ENCODE measurements at regions of chr10 and their contacts with region 1.

Region 1: DNA sequence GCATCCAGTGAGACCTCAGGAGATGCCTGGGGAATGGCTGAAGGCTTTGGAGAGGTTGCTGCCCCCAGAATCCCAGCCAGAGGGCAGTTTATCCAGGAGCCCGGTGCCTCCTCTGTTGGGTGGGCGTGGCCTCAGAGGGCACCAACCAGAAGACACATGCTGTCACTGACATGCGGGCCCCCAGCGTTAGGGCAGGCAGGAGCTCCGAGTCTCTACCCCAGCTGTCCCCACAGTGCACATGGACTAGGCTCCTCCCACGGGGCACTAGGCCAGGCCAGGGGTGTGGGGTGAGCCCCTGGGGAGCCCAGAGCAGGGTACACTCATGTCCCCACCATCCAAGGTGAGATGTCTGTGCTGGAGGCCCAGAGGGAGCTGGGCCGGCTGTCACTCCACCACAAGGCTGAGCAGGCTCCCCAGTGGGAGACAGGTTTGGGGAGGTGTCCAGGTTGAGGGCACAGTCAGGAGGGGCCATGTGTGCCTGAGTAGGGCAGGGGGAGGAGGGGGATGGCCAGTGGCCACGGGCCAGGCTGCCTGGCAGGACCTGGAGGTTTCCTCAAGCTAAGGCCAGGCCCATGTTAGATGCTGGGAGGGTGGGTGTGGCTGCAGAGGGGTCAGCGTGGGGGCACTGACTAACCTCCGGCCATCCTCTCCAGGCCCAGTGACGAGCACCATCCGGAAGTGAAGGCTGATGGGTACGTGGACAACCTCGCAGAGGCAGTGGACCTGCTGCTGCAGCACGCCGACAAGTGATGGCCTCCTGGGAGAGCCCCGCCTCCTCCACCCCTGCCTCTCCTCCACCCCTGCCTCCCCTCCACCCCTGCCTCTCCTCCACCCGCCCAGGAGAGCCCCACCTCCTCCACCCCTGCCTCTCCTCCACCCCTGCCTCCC is 131.3 kb downstream of the FAM53B start:
- DNase-seq: no peak
- H3K4me3 ChIP-seq: no peak overlapping the region
- H3K27ac ChIP-seq: peak overlapping the region; percentile 18 to 88 (median 81)
- H3K4me1 ChIP-seq: peaks cover 27 to 94% (median 60%) of the 10 kb centered on the region in 6 donors
- H3K27me3 ChIP-seq: no peaks in the 10 kb centered on the region
- CTCF ChIP-seq: no peak
- POLR2A ChIP-seq: no peak

Region 2: DNA sequence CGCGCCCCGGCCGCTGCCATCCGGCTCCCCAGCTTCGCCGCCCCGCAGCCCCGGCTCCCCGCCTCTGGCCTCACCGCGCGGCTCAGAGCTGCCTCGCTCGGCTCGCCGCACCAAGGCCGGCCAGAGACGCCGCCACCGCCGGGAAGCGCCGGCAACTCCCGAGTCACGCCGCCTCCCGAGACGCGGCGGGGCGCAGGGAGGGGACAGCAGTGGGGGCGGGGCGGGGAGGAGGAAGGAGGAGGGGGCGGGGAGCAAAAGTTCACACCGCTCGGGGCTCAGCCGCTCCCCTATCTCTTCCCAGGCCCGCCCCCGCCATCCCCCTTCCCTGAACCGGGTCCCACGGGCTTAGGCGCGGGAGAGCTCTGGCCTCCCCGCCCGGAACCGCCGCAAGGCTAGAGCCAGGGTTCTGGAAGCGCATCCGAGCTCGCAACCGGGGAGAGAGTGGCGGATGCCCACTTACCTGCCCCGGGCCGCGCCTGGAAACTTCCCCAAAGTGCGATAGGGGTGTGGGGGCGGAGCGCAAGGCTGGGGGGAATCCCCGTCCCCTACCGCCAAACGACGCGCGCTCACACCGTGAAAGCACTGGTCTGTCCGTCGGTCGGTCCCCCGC is 520.5 kb before region 1 on chr10:
- intact Hi-C with region 1: no loop called
- DNase-seq: peak; percentile 96
- H3K4me3 ChIP-seq: peak overlapping the region; percentile 35 to 87 (median 62)
- H3K27ac ChIP-seq: peak overlapping the region; percentile 82 to 99 (median 95)
- H3K4me1 ChIP-seq: peaks cover 11 to 81% (median 54%) of the 10 kb centered on the region in 6 donors
- H3K27me3 ChIP-seq: peaks cover 0 to 43% (median 4%) of the 10 kb centered on the region in 7 donors
- CTCF ChIP-seq: peak in 2 of 11 experiments; percentile 5 to 16
- POLR2A ChIP-seq: peak in 1 of 3 donors; percentile 50

Region 3: DNA sequence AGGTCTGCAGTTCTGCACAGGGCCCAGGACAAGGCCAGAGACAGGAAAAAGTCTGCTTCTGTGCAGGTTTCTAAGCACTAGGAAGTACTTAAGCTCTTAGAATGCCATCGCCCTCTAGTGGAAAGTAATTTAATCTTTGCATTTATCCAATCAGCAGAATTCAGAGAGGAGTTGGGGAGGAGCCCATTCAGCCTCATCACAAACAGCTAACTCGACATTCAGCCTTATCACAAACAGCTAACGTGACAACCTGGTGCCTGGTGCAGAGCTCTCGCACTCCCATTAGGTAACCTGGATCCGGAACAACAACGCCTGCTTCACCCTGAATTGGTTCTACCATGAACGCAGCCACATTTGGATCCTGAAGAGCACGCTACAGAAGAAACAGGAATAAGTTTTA is 209.3 kb before region 1 on chr10:
- intact Hi-C with region 1: no loop called
- DNase-seq: no peak
- H3K4me3 ChIP-seq: no peak overlapping the region
- H3K27ac ChIP-seq: peak overlapping the region in 3 of 8 donors; percentile 6 to 45 (median 44)
- H3K4me1 ChIP-seq: peaks cover 3 to 12% (median 10%) of the 10 kb centered on the region in 6 donors
- H3K27me3 ChIP-seq: no peaks in the 10 kb centered on the region
- CTCF ChIP-seq: peak; percentile 38 to 75 (median 61)
- POLR2A ChIP-seq: no peak

Region 4: GRCh38 chr10:124539935-124540641 is 72.8 kb before region 1 on chr10:
- intact Hi-C with region 1: loop called (anchors 10 kb)
- DNase-seq: peak; percentile 95
- H3K4me3 ChIP-seq: peak overlapping the region in 1 of 8 donors; percentile 16
- H3K27ac ChIP-seq: peak overlapping the region in 5 of 8 donors; percentile 58 to 87 (median 78)
- H3K4me1 ChIP-seq: peaks cover 10 to 99% (median 56%) of the 10 kb centered on the region in 6 donors
- H3K27me3 ChIP-seq: no peaks in the 10 kb centered on the region
- CTCF ChIP-seq: peak; percentile 63 to 88 (median 80)
- POLR2A ChIP-seq: no peak

Region 5: DNA sequence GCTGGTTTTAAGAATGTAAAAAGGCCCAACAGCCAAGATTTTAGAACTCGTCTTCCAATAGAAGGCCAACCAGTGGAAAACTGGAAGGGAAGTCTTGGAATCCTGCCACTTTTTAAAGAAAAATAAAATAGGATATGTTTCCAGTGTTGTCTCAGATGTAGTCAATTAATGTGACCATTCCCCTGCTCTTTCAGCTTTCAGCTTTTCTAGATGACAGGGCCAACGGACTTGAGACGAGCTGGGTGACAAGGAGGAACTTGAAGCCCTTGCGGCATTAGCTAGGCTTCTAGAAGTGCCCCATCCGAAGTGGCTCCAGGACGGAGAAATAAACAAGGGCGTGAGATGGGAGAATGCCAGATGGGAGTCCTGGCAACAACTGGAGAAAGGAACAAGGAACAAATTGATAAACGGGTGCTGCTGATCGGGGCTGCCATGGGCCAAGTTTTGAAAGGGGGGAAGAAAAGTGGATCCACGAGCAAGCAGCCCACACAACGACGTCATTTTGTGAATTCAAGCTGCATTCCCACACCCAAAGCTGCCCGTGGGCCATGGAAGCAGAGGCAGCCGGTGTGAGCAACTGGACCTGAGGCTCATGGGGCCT is 505.3 kb after region 1 on chr10:
- intact Hi-C with region 1: no loop called
- DNase-seq: peak; percentile 31
- H3K4me3 ChIP-seq: no peak overlapping the region
- H3K27ac ChIP-seq: peak overlapping the region in 6 of 8 donors; percentile 37 to 55 (median 50)
- H3K4me1 ChIP-seq: peaks cover 18 to 93% (median 53%) of the 10 kb centered on the region in 6 donors
- H3K27me3 ChIP-seq: no peaks in the 10 kb centered on the region
- CTCF ChIP-seq: no peak
- POLR2A ChIP-seq: no peak

Measured in spleen (tissue), 13 donors.